ENCODE measurements at regions of chr16 and their contacts with region 1.

Region 1: DNA sequence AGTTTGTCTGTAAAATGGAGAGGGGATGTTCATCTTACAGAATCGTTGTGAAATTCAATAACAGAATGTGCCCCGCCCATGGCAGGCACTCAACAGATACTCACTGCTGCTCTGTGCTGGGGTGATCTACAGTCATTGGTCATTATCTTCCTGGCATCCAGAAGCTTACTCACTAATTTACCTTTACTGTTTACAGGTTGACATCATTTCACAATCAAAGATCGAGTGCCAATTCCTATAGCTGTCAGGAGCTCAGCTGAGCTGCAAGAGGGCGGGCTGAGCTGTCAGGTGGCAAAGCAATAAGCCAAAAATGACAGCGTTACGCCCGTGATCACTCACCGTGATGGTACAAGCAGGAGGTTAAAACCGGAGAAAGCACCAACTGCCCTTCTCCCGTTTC is 51.2 kb downstream of the LITAF start:
- DNase-seq: no peak
- H3K4me3 Mint-ChIP-seq: no peak overlapping the region
- H3K27ac Mint-ChIP-seq: no peak overlapping the region
- H3K4me1 Mint-ChIP-seq: peaks cover 2% of the 10 kb centered on the region
- H3K27me3 Mint-ChIP-seq: no peaks in the 10 kb centered on the region

Region 2: GRCh38 chr16:11515540-11516430 is 19.7 kb before region 1 on chr16:
- CTCF ChIA-PET with region 1: interaction called, 23 read pairs
- POLR2A ChIA-PET with region 1: no interaction called
- intact Hi-C with region 1: no loop called
- DNase-seq: no peak
- H3K4me3 Mint-ChIP-seq: no peak overlapping the region
- H3K27ac Mint-ChIP-seq: no peak overlapping the region
- H3K4me1 Mint-ChIP-seq: no peaks in the 10 kb centered on the region
- H3K27me3 Mint-ChIP-seq: no peaks in the 10 kb centered on the region

Region 3: DNA sequence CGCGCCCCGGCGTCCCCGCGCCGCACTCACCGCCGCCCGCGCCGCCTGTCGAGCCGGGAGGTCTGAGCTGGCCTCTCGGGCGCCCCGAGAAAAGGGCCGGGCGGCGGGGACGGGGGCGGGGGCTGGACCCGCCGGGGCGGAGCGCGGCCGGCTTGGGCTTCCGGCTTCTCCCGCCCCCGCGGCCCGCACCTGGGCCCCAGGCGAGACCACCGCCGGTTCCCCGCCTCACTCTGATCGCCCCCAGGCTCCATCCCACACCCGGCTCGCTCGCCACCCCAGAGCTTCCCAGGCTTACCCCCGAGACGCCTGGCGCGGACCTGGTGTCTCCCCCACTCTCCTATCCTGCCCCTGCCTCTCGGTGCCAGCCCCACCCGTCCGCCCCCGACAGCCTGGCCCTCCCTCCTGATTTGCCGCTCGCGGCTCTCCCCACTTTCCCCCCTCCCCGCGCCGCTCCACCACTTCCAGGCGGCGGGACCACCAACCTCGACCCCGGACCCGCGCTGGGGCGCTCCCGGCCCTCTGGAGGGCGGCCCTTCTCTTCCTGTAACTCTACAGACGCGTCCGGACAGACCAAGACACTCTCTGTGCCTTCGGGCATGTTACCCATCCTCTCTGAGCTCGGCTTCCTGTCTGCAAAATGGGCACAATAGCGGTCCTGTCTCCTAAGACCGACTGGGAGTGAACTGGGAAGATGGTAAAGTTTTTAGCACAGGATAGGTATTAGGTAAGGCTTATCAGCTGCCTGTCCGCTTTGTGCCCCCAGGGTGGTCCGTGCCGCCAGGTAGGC is 51.6 kb after region 1 on chr16 and contains the start of gene LITAF:
- CTCF ChIA-PET with region 1: interaction called, 11 read pairs
- POLR2A ChIA-PET with region 1: no interaction called
- intact Hi-C with region 1: no loop called
- DNase-seq: peak; percentile 76
- H3K4me3 Mint-ChIP-seq: peak within 1 kb of the TSS; percentile 90
- H3K27ac Mint-ChIP-seq: peak within 1 kb of the TSS; percentile 91
- H3K4me1 Mint-ChIP-seq: peaks cover 30% of the 10 kb centered on the region
- H3K27me3 Mint-ChIP-seq: no peaks in the 10 kb centered on the region
- total RNA-seq, gene LITAF: 130 to 134 TPM

Region 4: DNA sequence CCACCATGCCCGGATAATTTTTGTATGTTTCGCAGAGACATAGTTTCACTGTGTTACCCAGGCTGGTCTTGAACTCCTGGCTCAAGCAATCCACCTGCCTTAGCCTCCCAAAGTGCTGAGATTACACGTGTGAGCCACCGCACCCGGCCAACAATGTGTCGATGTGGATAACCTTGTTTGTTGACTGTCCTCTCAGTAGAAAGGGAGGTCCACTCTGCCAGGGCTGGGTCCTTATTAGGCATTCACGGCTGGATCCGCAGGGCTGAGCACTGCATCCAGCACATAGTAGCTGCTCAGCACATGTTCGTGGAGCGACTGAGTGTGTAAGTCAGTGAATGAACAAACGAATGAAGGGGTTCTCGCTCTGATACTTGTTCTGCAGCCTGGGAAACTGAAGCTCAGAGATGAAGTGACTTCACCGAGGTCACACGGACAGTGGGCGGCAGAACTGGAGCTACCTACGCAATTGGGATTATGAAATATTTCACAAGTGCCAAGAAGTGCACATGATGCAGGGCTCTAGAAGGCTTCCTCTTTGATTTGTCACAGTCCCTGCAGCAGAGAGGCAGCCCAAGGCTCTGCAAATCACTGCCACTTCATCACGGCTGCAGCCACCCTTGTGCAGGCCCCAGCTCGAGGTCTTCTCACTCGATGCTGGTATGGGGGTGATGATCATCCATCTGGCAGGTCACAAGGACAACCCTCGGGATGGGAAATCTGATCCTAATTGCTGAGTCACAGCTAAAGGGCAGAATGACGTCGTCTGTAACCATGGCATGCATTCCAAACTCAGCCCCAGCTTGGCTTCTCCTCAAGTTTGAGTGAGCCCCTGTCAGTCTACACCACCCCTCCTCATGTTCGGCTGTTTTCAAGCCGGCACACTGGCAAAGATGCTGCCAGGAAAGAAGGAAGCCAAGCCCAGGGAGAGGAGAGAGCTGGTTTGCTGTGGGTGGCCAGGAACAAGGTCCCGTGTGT is 104.7 kb after region 1 on chr16:
- CTCF ChIA-PET with region 1: interaction called, 65 read pairs
- POLR2A ChIA-PET with region 1: no interaction called
- intact Hi-C with region 1: loop called (anchors 1 kb)
- DNase-seq: no peak
- H3K4me3 Mint-ChIP-seq: no peak overlapping the region
- H3K27ac Mint-ChIP-seq: no peak overlapping the region
- H3K4me1 Mint-ChIP-seq: peaks cover 5% of the 10 kb centered on the region
- H3K27me3 Mint-ChIP-seq: no peaks in the 10 kb centered on the region

Region 5: DNA sequence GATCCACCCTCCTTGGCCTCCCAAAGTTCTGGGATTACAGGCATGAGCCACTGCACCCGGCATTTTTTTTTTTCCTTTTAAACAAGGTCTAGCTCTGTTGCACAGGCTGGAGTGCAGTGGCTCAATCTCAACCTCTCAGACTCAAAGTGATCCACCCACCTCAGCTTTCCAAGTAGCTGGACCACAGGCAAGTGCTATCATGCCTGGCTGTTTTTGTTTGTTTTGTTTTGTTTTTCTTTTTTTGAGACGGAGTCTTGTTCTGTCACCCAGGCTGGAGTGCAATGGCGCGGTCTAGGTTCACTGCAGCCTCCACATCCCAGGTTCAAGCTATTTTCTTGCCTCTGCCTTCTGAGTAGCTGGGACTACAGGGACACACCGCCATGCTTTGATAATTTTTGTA is 280.6 kb after region 1 on chr16:
- CTCF ChIA-PET with region 1: interaction called, 4 read pairs
- POLR2A ChIA-PET with region 1: no interaction called
- intact Hi-C with region 1: loop called (anchors 1 kb)
- DNase-seq: no peak
- H3K4me3 Mint-ChIP-seq: no peak overlapping the region
- H3K27ac Mint-ChIP-seq: no peak overlapping the region
- H3K4me1 Mint-ChIP-seq: peaks cover 3% of the 10 kb centered on the region
- H3K27me3 Mint-ChIP-seq: no peaks in the 10 kb centered on the region